Sciatic nerve (tissue), 2 donors: ENCODE measurements at regions of chr10 and their contacts with region 1.

Region 1: DNA sequence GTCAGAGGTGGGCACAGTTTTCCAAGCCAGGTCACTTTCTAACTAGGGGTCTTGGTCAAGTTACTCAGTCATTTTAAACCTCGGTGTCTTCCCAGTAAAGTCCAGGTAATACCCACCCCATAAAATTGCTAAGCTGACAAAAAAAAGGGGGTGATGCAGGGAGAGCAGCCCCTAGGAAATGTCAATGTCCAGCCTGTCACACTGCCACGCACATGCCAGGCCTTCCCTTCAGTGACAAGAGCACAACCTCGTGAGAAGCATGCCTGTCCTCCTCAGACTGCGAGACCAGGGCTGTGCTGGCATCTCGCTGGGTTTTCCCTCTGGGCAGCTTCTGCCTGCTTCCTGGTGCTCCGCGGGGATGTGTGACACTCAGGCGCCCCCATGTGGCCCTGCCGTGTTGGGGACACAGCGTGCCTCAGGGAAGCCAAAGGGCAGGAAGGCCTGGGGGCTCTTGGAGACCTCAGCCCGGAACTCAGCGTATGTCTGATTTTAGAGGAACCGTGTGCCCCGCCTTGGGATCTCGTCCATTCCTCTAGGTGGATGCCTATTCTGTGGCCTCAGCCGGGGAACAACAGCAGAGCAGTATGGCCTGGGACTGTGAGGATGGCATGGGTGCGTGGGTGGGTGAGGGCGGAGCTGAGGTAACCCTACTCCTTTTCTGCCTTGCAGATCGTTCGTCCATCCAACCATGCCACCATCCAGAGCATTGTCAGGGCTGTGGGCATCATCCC is 10.2 kb upstream of the GDF2 start:
- DNase-seq: peak; percentile 87
- ATAC-seq: peak; percentile 92

Region 2: GRCh38 chr10:47024399-47025252 is 287.5 kb before region 1 on chr10:
- intact Hi-C with region 1: loop called (anchors 2 kb)
- DNase-seq: peak; percentile 73
- ATAC-seq: peak; percentile 72